Activated CD8-positive, alpha-beta T cell treated with anti-CD3 and anti-CD28 coated beads, Interleukin-2, amount 10 ng/mL, durations not matched to agents 7 days and 5 days (primary cell): ENCODE measurements at regions of chr12 and their contacts with region 1.

Region 1: DNA sequence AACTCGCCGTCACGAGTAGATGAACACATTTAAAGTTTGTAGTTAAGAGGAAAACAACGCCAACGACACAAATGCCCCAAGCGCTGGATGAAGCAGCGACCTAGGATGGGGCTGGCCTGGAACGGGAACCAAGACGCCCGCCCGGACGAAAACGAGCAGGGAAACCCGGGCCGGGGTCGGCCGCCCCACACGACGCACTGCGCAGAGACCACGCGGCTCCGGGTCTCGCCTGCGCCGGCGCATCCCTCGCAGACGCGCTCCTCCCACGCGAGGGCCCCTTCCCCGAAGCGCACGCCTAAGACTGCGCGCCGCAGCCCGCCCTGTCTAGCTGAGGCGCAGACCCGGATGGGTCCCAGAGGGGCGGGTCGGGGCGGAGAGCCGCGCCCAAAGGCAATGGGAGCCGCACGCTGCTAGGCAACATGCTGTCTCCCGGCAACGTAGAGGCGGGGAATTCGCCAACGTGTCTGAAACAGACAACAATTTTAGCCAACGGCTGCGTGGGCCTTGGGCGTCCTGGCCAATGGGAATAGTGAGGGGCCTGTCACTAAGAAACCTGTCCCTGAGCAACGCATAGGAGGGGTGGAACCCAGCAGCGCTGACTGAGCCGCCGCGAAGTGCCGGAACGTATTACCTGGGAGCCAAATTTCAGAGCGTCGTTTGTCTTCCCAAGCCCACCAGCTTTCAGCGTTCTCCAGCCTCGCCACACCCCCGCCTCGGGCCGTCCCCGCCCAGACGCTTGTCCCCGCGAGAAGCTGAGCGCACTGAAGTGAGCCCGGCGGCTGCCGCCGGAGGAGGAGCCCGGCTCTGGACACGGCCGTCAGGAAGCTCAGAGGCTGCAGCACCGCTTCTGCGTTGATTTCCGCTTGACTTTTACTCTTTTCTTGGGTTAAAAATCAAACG is 21.0 kb upstream of the CHFR start:
- DNase-seq: peak; percentile 98
- ATAC-seq: peak; percentile 97
- H3K4me3 Mint-ChIP-seq: peak overlapping the region; percentile 86
- H3K27ac Mint-ChIP-seq: peak overlapping the region; percentile 95
- H3K4me1 Mint-ChIP-seq: peaks cover 23% of the 10 kb centered on the region
- H3K27me3 Mint-ChIP-seq: peaks cover 14% of the 10 kb centered on the region

Region 2: GRCh38 chr12:132766380-132767085 is 141.9 kb before region 1 on chr12:
- CTCF ChIA-PET with region 1: interaction called, 33 read pairs
- POLR2A ChIA-PET with region 1: interaction called, 3 read pairs
- DNase-seq: no peak
- ATAC-seq: no peak
- H3K4me3 Mint-ChIP-seq: peak overlapping the region; percentile 8
- H3K27ac Mint-ChIP-seq: no peak overlapping the region
- H3K4me1 Mint-ChIP-seq: peaks cover 57% of the 10 kb centered on the region
- H3K27me3 Mint-ChIP-seq: no peaks in the 10 kb centered on the region

Region 3: GRCh38 chr12:132834181-132834711 is 74.1 kb before region 1 on chr12:
- CTCF ChIA-PET with region 1: interaction called, 24 read pairs
- POLR2A ChIA-PET with region 1: interaction called, 6 read pairs
- DNase-seq: peak; percentile 79
- ATAC-seq: peak; percentile 72
- H3K4me3 Mint-ChIP-seq: peak overlapping the region; percentile 53
- H3K27ac Mint-ChIP-seq: peak overlapping the region; percentile 95
- H3K4me1 Mint-ChIP-seq: peaks cover 66% of the 10 kb centered on the region
- H3K27me3 Mint-ChIP-seq: no peaks in the 10 kb centered on the region

Region 4: GRCh38 chr12:132872975-132873421 is 35.4 kb before region 1 on chr12:
- CTCF ChIA-PET with region 1: interaction called, 15 read pairs
- POLR2A ChIA-PET with region 1: interaction called, 3 read pairs
- DNase-seq: peak; percentile 67
- ATAC-seq: peak; percentile 85
- H3K4me3 Mint-ChIP-seq: peak overlapping the region; percentile 43
- H3K27ac Mint-ChIP-seq: peak overlapping the region; percentile 81
- H3K4me1 Mint-ChIP-seq: peaks cover 32% of the 10 kb centered on the region
- H3K27me3 Mint-ChIP-seq: no peaks in the 10 kb centered on the region

Region 5: DNA sequence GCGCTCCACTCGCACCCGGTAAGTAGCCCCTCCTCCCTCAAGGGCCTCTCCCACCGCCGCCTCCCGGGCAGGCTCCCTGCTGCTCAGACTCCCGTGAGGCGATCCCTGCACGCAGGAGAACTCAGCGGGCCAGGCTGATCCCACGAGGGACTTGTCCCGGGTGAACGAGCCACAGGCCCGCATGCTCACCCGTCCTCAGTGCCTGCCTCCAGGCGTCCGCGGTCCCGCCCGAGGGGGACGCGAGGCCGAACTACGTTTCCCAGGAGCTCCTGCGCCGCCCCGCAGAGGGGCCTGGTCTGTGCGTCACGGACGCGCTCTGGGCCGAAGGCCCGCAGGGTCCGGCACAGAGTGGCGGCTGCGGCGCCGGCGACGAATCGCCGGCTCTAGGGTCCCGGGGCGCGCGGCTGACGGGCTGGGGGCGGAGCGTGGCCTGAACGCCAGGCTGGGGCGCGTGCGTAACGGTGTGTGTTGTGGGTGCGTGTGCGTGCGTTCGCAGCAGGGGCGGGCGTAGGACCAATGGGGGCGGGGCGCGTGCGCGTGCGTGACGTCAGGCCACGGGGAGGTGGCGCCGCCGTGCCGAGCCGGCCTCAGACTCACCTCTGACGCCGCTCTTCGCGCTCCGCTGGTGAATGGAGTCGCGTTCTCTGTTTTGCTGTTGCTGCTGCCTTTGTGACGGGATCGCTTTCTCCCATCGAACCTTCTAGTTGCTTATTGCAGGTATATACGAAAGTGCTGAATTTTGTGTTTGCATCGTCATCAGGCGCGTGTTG is 221.8 kb after region 1 on chr12 and contains the starts of genes ZNF10 and ZNF891:
- CTCF ChIA-PET with region 1: no interaction called
- POLR2A ChIA-PET with region 1: interaction called, 10 read pairs
- DNase-seq: peak; percentile 97
- ATAC-seq: peak; percentile 91
- H3K4me3 Mint-ChIP-seq: peak within 1 kb of the TSS; percentile 91
- H3K27ac Mint-ChIP-seq: peak within 1 kb of the TSS; percentile 100
- H3K4me1 Mint-ChIP-seq: peaks cover 21% of the 10 kb centered on the region
- H3K27me3 Mint-ChIP-seq: no peaks in the 10 kb centered on the region
- total RNA-seq, gene ZNF10: 8.1 to 8.5 TPM
- total RNA-seq, gene ZNF891: 1.9 to 2.3 TPM